Activated T-helper 2 cell treated with anti-CD3 and anti-CD28 coated beads, Interferon-gamma antibody, Interleukin-2, Interleukin-4, amounts not matched to agents 10 μg/mL and 5 μg/mL and 100 μg/mL, durations not matched to agents 14 hours and 24 hours and 36 hours (primary cell): ENCODE measurements at regions of chr12 and their contacts with region 1.

Region 1: GRCh38 chr12:128914908-128915563 is 61.8 kb downstream of the GLT1D1 start:
- DNase-seq: peak; percentile 59
- H3K4me3 Mint-ChIP-seq: peak overlapping the region; percentile 37
- H3K27ac Mint-ChIP-seq: peak overlapping the region; percentile 84
- H3K4me1 Mint-ChIP-seq: peaks cover 58% of the 10 kb centered on the region
- H3K27me3 Mint-ChIP-seq: no peaks in the 10 kb centered on the region

Region 2: GRCh38 chr12:127559349-127560040 is 1355.5 kb before region 1 on chr12:
- intact Hi-C with region 1: loop called (anchors 10 kb)
- DNase-seq: peak; percentile 84
- H3K4me3 Mint-ChIP-seq: peak overlapping the region; percentile 51
- H3K27ac Mint-ChIP-seq: peak overlapping the region; percentile 98
- H3K4me1 Mint-ChIP-seq: peaks cover 60% of the 10 kb centered on the region
- H3K27me3 Mint-ChIP-seq: no peaks in the 10 kb centered on the region

Region 3: DNA sequence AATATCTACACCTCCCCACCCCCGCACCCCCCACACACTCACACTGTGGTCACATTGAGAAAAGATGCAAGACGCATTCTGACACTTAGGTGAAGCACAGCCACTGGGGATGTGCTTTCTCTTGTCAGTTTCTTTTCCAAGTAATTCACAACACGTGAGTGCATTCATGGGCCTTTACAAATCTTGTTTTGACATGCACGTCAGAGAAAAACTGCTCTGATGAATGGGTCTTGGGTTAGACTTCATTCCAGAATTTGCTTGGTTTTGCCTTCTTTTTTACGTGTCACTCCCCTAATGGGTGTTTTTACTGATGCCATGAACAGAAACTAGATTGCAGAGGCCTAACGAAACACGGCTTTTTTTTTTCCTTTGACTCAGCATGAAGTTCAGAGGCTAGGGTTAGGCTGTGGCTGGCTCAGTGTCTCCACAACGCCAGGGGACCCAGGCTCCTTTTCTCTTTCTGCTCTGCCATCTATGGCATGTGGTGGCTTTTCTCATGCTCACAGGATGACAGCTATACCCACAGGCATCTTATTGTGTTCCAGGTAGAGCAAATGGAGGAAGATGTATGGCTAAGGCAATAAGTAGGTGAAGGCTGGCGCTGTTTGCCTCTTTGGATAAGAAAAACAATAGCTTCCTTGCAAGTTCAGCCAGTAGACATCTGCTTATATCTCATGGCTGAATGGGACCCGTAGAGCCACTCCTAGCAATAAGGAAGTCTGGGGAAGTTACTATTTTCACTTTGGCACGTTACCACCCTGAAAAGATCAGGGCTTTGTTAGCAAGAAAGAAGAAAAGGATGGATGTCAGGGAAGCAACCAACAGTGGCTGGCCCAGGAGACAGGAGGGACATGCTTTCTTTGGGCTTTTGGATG is 344.6 kb before region 1 on chr12:
- intact Hi-C with region 1: no loop called
- DNase-seq: no peak
- H3K4me3 Mint-ChIP-seq: no peak overlapping the region
- H3K27ac Mint-ChIP-seq: peak overlapping the region; percentile 43
- H3K4me1 Mint-ChIP-seq: peaks cover 4% of the 10 kb centered on the region
- H3K27me3 Mint-ChIP-seq: no peaks in the 10 kb centered on the region

Region 4: GRCh38 chr12:128810182-128811127 is 104.6 kb before region 1 on chr12:
- intact Hi-C with region 1: loop called (anchors 1 kb)
- DNase-seq: peak; percentile 41
- H3K4me3 Mint-ChIP-seq: peak overlapping the region; percentile 62
- H3K27ac Mint-ChIP-seq: peak overlapping the region; percentile 82
- H3K4me1 Mint-ChIP-seq: peaks cover 51% of the 10 kb centered on the region
- H3K27me3 Mint-ChIP-seq: no peaks in the 10 kb centered on the region

Region 5: GRCh38 chr12:128823916-128824839 is 90.9 kb before region 1 on chr12 and contains the start of gene SLC15A4:
- intact Hi-C with region 1: loop called (anchors 2 kb)
- DNase-seq: peak; percentile 93
- H3K4me3 Mint-ChIP-seq: peak within 1 kb of the TSS; percentile 86
- H3K27ac Mint-ChIP-seq: peak within 1 kb of the TSS; percentile 80
- H3K4me1 Mint-ChIP-seq: peaks cover 33% of the 10 kb centered on the region
- H3K27me3 Mint-ChIP-seq: no peaks in the 10 kb centered on the region
- total RNA-seq, gene SLC15A4: 38.8 and 42.3 TPM in 2 replicates

Region 6: GRCh38 chr12:128829861-128830504 is 85.1 kb before region 1 on chr12:
- intact Hi-C with region 1: loop called (anchors 1 kb)
- DNase-seq: peak; percentile 31
- H3K4me3 Mint-ChIP-seq: peak overlapping the region; percentile 19
- H3K27ac Mint-ChIP-seq: peak overlapping the region; percentile 90
- H3K4me1 Mint-ChIP-seq: peaks cover 22% of the 10 kb centered on the region
- H3K27me3 Mint-ChIP-seq: no peaks in the 10 kb centered on the region